A549 (cell line): ENCODE measurements at regions of chr14 and their contacts with region 1.

Region 1: GRCh38 chr14:63641473-63642228 is at the start of gene WDR89:
- DNase-seq: peak; percentile 98 to 100
- ATAC-seq: peak; percentile 96
- H3K4me3 ChIP-seq: peak within 1 kb of the TSS; percentile 55
- H3K27ac ChIP-seq: peak within 1 kb of the TSS; percentile 85 to 90
- H3K4me1 ChIP-seq: peaks cover 15% of the 10 kb centered on the region; the same call in 2 of the 3 replicates
- CTCF ChIP-seq: peak; percentile 50; the same call in 2 of the 3 replicates
- EP300 ChIP-seq: no peak
- POLR2A ChIP-seq: peak; percentile 85
- RAD21 ChIP-seq: peak; percentile 38 to 50; a peak in 4 of 5 replicates
- polyA plus RNA-seq, gene WDR89: 15.7 and 20.9 TPM in 2 replicates

Region 2: DNA sequence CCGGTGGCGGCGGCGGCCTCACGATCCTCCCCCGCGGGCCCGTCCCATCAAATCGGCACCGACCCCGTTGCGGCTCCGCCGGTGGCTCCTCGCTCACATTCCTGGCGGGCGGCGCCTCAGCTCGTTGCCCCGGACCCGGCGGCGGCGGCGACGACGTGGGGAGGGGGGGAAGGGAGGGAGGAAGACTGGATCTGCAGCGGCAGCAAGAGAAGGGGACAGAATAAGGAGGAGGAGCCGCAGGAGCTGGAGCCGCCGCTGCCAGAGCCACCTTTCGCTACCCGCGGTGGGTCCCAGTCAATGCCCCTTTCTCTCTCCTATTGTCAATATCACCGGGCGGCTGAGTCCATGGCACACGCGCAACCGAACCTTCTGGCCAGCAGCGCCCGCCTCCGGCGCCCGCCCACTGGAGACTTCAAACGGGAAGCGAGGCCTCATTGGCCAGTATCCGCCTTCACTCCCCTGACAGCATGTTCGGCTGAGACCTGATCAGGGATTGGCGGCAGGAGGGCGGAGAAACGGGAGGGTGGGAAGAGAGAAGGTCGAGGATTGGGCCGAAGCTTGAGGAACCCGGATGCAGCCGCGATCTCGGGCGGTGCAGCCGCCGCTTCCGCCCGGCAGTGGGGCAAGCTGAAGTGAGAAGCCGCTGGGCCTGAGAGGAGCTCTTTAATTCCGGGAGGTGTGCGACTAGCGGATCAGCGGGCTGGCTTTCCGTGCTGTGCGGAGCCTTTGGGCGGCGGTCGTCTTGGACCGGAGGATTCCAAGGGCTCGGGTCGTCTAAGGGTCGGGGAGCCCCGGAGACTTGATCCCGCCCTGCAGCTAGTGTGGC is 98.4 kb before region 1 on chr14 and contains the start of gene PPP2R5E:
- CTCF ChIA-PET with region 1: no interaction called
- POLR2A ChIA-PET with region 1: interaction called, 37 read pairs
- DNase-seq: peak; percentile 96 to 99
- ATAC-seq: peak; percentile 97 to 98
- H3K4me3 ChIP-seq: peak within 1 kb of the TSS; percentile 71
- H3K27ac ChIP-seq: peak within 1 kb of the TSS; percentile 92 to 97
- H3K4me1 ChIP-seq: peaks cover 10% of the 10 kb centered on the region; the same call in 2 of the 3 replicates
- CTCF ChIP-seq: no peak
- EP300 ChIP-seq: no peak
- POLR2A ChIP-seq: peak; percentile 86
- RAD21 ChIP-seq: no peak
- polyA plus RNA-seq, gene PPP2R5E: 23.2 and 25.0 TPM in 2 replicates

Region 3: DNA sequence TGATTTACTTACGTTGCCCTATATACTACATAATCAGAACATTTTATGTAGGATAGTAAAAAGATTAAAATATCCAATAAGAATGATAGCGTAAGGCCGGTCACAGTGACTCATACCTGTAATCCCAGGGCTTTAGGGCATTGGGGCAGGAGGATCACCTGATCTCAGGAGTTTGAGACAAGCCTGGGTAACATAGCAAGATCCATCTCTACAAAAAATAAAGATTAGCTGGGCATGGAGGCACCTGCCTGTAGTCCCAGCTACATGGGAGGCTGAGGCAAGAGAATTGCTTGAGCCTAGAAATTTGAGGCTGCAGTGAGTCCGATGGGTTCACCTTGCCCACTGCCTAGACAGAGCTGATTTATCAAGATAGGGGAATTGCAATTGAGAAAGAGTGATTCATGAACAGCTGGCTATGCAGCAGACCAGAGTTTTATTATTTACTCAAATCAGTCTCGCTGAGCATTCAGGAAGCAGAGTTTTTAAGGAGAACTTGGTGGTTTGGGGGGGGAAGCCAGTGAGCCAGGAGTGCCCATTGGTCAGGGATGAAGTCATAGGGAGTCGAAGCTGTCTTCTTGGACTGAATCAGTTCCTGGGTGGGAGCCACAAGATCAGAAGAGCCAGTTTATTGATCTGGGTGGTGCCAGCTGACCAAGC is 111.0 kb after region 1 on chr14:
- CTCF ChIA-PET with region 1: no interaction called
- POLR2A ChIA-PET with region 1: interaction called, 16 read pairs
- DNase-seq: peak in 1 of 2 experiments; percentile 73
- ATAC-seq: peak; percentile 67 to 94
- H3K4me3 ChIP-seq: no peak overlapping the region
- H3K27ac ChIP-seq: peak overlapping the region in 1 of 2 experiments; percentile 38; a peak in 4 of 6 replicates
- H3K4me1 ChIP-seq: peaks cover 10% of the 10 kb centered on the region; the same call in 2 of the 3 replicates
- CTCF ChIP-seq: no peak
- EP300 ChIP-seq: no peak
- POLR2A ChIP-seq: no peak
- RAD21 ChIP-seq: no peak